ENCODE measurements at regions of chr12 and their contacts with region 1.

Region 1: GRCh38 chr12:103930034-103930786 is at the start of gene HSP90B1:
- DNase-seq: peak; percentile 95 to 100 (median 99)
- ATAC-seq: peak; percentile 84
- H3K4me3 ChIP-seq: peak within 1 kb of the TSS; percentile 76
- H3K4me3 Mint-ChIP-seq: peak within 1 kb of the TSS; percentile 84 to 99 (median 92)
- H3K27ac ChIP-seq: peak within 1 kb of the TSS; percentile 100
- H3K27ac Mint-ChIP-seq: peak within 1 kb of the TSS; percentile 97 to 100 (median 100)
- H3K4me1 ChIP-seq: peaks cover 36 to 45% of the 10 kb centered on the region in 2 donors
- H3K4me1 Mint-ChIP-seq: peaks cover 42 to 67% (median 53%) of the 10 kb centered on the region in 7 donors
- H3K27me3 ChIP-seq: no peaks in the 10 kb centered on the region
- H3K27me3 Mint-ChIP-seq: peaks cover 0 to 4% (median 0%) of the 10 kb centered on the region in 5 donors
- total RNA-seq, gene HSP90B1: 226 to 461 (median 436) TPM

Region 2: GRCh38 chr12:103840876-103841689 is 89.1 kb before region 1 on chr12 and contains the start of gene NT5DC3:
- CTCF ChIA-PET with region 1: no interaction called
- POLR2A ChIA-PET with region 1: interaction called, 9 read pairs
- intact Hi-C with region 1: loop called (anchors 1 kb)
- DNase-seq: peak; percentile 77 to 93 (median 87)
- ATAC-seq: peak; percentile 98
- H3K4me3 ChIP-seq: peak within 1 kb of the TSS; percentile 68
- H3K4me3 Mint-ChIP-seq: peak within 1 kb of the TSS; percentile 80 to 92 (median 86)
- H3K27ac ChIP-seq: peak within 1 kb of the TSS; percentile 55
- H3K27ac Mint-ChIP-seq: peak within 1 kb of the TSS in 8 of 9 donors; percentile 61 to 89 (median 76)
- H3K4me1 ChIP-seq: peaks cover 7 to 9% of the 10 kb centered on the region in 2 donors
- H3K4me1 Mint-ChIP-seq: peaks cover 5 to 26% (median 18%) of the 10 kb centered on the region in 7 donors
- H3K27me3 ChIP-seq: no peaks in the 10 kb centered on the region
- H3K27me3 Mint-ChIP-seq: peaks cover 0 to 35% (median 0%) of the 10 kb centered on the region in 5 donors
- total RNA-seq, gene NT5DC3: 3.9 to 5.0 (median 4.5) TPM

Region 3: GRCh38 chr12:103901518-103902173 is 28.6 kb before region 1 on chr12:
- CTCF ChIA-PET with region 1: interaction called, 13 read pairs
- POLR2A ChIA-PET with region 1: interaction called, 149 read pairs
- intact Hi-C with region 1: loop called in 1 of 2 experiments (anchors 1 kb)
- DNase-seq: peak in 7 of 9 donors; percentile 63 to 84 (median 78)
- ATAC-seq: peak; percentile 96
- H3K4me3 ChIP-seq: peak overlapping the region; percentile 50
- H3K4me3 Mint-ChIP-seq: peak overlapping the region; percentile 40 to 84 (median 74)
- H3K27ac ChIP-seq: peak overlapping the region; percentile 66
- H3K27ac Mint-ChIP-seq: peak overlapping the region in 8 of 9 donors; percentile 80 to 97 (median 94)
- H3K4me1 ChIP-seq: peaks cover 19 to 54% of the 10 kb centered on the region in 2 donors
- H3K4me1 Mint-ChIP-seq: peaks cover 18 to 79% (median 62%) of the 10 kb centered on the region in 7 donors
- H3K27me3 ChIP-seq: no peaks in the 10 kb centered on the region
- H3K27me3 Mint-ChIP-seq: no peaks in the 10 kb centered on the region

Region 4: DNA sequence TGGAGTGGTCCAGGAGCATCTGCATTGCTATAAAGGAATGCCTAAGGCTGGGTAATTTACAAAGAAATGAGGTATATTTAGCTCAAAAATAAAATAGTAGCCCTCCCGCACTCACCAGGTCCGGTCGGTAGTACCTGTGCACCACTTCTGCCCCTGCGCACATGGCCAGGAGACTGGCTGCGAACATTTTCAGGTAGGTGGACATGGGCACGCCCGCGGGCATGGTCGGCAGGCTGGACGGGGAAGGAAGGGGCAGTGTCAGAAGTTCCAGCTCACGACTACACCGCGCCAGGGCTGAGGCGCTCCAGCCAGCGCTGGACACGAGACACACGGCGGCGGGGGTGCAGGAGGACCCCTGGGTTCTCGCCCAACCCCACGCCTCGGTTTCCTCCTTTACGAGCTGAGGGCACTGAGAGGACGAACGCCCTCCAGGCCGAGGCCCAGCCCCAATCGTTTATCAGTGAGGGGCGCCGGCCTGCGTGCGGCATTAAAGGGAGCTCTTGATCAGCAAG is 26.4 kb after region 1 on chr12:
- CTCF ChIA-PET with region 1: interaction called, 3 read pairs
- POLR2A ChIA-PET with region 1: interaction called, 124 read pairs
- intact Hi-C with region 1: loop called (anchors 1 kb)
- DNase-seq: peak in 3 of 9 donors; percentile 4 to 7 (median 5)
- ATAC-seq: no peak
- H3K4me3 ChIP-seq: peak overlapping the region; percentile 91
- H3K4me3 Mint-ChIP-seq: peak overlapping the region; percentile 95 to 100 (median 99)
- H3K27ac ChIP-seq: peak overlapping the region; percentile 73
- H3K27ac Mint-ChIP-seq: peak overlapping the region; percentile 93 to 99 (median 98)
- H3K4me1 ChIP-seq: peaks cover 13 to 17% of the 10 kb centered on the region in 2 donors
- H3K4me1 Mint-ChIP-seq: peaks cover 25 to 58% (median 43%) of the 10 kb centered on the region in 7 donors
- H3K27me3 ChIP-seq: no peaks in the 10 kb centered on the region
- H3K27me3 Mint-ChIP-seq: no peaks in the 10 kb centered on the region

Region 5: GRCh38 chr12:104108755-104109445 is 178.7 kb after region 1 on chr12:
- CTCF ChIA-PET with region 1: interaction called, 9 read pairs
- POLR2A ChIA-PET with region 1: interaction called, 14 read pairs
- intact Hi-C with region 1: loop called in 1 of 2 experiments (anchors 1 kb)
- DNase-seq: peak; percentile 65 to 87 (median 82)
- ATAC-seq: peak; percentile 99
- H3K4me3 ChIP-seq: no peak overlapping the region
- H3K4me3 Mint-ChIP-seq: peak overlapping the region in 8 of 10 donors; percentile 13 to 77 (median 59)
- H3K27ac ChIP-seq: no peak overlapping the region
- H3K27ac Mint-ChIP-seq: peak overlapping the region in 8 of 9 donors; percentile 0 to 82 (median 37)
- H3K4me1 ChIP-seq: peaks cover 4 to 6% of the 10 kb centered on the region in 2 donors
- H3K4me1 Mint-ChIP-seq: peaks cover 6 to 19% (median 10%) of the 10 kb centered on the region in 7 donors
- H3K27me3 ChIP-seq: no peaks in the 10 kb centered on the region
- H3K27me3 Mint-ChIP-seq: no peaks in the 10 kb centered on the region

Region 6: DNA sequence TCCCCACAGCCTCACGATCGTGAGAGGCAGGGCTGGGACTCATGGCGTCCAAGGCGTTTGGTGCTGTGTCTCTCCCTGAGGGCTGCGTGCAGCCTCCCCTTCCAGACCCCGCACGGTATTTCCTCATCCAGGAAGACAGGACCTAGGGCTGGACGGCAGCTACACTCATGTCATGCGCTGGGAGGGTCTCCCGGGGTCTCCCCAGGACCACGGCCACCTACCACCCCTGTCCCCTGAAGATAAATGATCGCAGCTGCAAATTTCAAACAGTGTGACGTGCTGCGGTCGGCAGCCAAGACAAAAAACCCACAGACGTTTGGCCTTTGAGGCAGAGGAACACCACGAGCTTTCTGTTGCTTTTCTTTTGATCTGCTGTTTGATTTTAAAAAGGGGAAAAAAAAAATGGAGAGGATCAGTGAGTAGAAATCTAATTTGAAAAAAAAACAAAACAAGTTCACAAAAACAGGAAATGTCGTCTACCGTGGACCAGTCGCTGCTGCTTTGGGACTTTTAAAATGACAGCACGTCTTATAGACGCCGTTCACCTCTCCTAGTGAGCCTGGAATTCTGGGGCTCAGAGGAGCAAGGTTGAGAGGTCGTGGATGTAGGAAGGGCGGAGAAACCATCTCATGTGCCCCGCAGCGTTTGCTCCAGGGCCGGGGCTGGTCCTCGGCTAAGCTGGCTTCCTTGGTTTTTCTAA is 790.3 kb after region 1 on chr12:
- CTCF ChIA-PET with region 1: no interaction called
- POLR2A ChIA-PET with region 1: no interaction called
- intact Hi-C with region 1: loop called in 1 of 2 experiments (anchors 2 kb)
- DNase-seq: peak; percentile 32 to 92 (median 88)
- ATAC-seq: peak; percentile 87
- H3K4me3 ChIP-seq: peak overlapping the region; percentile 72
- H3K4me3 Mint-ChIP-seq: peak overlapping the region; percentile 73 to 95 (median 81)
- H3K27ac ChIP-seq: peak overlapping the region; percentile 77
- H3K27ac Mint-ChIP-seq: peak overlapping the region; percentile 86 to 96 (median 92)
- H3K4me1 ChIP-seq: peaks cover 30 to 39% of the 10 kb centered on the region in 2 donors
- H3K4me1 Mint-ChIP-seq: peaks cover 41 to 82% (median 65%) of the 10 kb centered on the region in 7 donors
- H3K27me3 ChIP-seq: no peaks in the 10 kb centered on the region
- H3K27me3 Mint-ChIP-seq: peaks cover 0 to 3% (median 0%) of the 10 kb centered on the region in 5 donors